Right ventricle myocardium inferior (tissue), 1 donor: ENCODE measurements at regions of chr17 and their contacts with region 1.

Region 1: DNA sequence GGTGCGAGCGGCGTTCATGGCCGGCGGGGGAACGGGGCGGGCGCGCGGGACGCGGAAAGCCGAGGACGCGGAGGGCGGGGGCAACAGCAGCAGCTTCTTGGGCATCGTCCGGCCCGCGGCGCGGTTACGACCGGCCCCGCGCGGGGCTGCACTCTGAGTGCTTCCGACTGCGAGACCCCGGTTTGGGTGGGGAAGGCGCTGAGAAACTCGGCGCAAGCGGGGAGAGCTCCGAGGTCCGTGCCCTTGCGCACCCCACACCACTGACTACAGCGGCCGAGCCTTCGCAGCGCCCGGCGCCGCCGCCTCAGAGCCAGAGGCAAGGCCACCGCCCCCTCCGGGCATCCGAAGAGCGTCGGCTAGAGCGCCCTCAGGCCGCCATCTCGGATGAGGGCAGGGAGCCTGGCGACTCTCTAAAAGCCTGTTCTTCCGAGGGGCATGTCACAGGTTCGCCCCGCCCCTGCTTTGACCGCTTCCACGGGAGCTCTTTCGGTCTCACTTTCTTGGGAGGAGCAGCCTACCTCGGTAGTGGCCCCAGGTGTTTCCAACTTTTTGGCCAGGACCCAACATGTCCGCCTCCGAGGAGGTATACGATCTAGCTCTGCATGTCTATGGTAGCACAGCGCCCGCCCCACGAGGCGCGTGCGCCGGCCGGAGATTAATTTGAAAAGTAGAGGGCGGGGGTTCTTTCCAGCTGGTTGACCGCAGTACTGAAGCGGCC is at the start of gene PRPSAP1:
- DNase-seq: peak; percentile 95
- ATAC-seq: peak; percentile 99
- total RNA-seq, gene PRPSAP1: 35.9 TPM

Region 2: DNA sequence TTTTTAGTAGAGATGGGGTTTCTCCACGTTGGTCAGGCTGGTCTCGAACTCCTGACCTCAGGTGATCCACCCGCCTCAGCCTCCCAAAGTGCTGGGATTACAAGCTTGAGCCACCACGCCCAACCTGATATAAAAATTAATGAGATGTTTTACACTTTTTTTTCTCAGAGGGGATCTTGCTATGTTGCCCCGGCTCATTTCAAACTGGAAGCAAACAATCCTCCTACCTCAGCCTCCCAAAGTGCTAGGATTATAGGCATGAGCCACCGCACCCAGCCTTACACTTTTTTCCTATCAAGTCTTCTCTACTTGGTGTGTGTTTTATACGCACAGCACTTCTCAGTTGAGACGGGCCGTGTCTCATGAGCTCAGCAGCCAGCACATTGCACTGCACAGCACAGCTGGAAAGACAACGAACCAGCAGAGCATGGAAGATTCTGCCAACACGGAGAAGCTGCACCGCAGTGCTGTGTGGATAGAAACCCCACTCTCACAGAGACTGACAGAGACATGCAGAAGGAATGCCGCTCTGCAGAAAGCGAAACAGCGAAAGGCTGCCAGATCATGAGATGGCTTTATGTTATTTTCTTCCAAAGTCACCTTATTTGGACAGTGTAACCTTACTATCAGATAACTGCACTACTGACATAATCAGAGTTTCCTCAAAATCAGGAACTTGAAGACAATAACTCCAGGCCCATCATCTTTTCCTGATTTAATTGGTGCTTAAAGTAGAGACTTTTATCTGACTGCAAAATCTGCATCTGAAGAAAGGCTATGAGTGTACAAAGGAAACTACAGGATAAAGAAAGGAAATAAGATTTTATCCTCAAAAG is 39.1 kb before region 1 on chr17:
- intact Hi-C with region 1: loop called (anchors 5 kb)
- DNase-seq: no peak
- ATAC-seq: no peak

Region 3: GRCh38 chr17:76327696-76328095 is 26.1 kb before region 1 on chr17:
- intact Hi-C with region 1: no loop called
- DNase-seq: no peak
- ATAC-seq: no peak

Region 4: DNA sequence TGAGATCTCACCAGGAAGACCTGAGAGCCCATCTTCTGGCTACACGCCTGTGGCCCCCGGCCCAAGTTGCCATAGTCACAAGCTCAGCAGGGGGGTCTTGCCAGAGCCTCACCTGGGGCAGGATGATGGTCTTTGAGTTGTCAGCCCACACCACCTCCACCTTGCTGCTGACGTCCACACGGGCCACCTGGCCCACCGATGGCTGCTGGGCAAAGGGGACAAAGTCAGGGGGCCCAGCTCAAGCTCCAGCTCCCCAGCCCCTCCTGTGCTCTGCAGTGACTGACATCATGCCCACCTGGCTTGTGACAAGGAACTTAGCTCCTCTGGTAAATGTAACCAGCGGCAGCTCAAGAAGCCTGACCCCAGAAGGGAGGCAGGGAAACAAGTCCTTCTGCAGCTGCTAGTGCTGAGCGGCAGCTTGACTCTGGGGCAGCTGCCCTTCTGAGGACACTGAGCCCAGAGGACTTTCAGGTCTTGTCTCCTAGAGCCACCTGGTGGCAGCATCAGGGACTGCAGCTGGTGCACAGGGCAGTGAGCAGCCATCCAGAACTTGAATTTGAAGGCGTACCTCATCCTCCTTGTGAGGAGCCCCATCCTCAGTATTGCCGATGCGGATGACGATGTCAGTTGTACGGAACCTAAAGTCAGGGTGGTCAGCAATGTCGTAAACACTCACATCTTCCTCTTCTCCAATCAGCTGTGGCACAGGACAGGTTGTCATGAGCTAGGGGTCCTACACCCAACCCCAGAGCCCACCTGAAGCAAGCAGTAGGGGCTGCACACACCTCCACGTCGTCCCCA is 44.1 kb after region 1 on chr17:
- intact Hi-C with region 1: loop called (anchors 5 kb)
- DNase-seq: peak; percentile 93
- ATAC-seq: peak; percentile 82